ENCODE measurements at regions of chr17 and their contacts with region 1.

Region 1: DNA sequence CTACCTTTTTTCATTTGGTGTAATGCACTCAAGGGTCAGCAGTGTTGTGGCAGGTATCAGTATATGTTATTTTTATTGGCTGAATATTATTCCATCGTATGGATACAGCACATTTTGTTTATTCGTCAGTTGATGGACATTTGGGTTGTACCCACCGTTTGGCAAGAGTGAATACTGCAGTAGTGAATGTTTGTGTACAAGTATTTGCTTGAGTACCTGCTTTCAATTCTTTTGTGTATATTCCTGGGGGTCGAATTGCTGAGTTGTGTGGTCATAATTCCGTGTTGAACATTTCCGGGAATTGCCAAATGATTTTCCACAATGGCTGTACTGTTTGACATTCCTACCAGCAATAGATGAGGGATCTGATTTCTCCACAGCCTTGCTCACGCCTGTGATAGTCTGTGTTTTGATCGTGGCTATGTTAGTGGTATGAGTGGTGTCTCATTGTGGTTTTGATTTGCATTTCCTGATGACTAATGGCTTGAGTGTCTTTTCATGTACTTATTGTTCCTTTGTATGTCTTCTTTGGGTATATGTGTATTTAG is 108.4 kb downstream of the OR1D5 start:
- DNase-seq: peak; percentile 34
- H3K4me3 Mint-ChIP-seq: no peak overlapping the region
- H3K27ac Mint-ChIP-seq: no peak overlapping the region
- H3K4me1 Mint-ChIP-seq: peaks cover 9% of the 10 kb centered on the region
- H3K27me3 Mint-ChIP-seq: no peaks in the 10 kb centered on the region

Region 2: GRCh38 chr17:2580661-2581060 is 374.3 kb before region 1 on chr17:
- CTCF ChIA-PET with region 1: no interaction called
- intact Hi-C with region 1: no loop called
- DNase-seq: no peak
- H3K4me3 Mint-ChIP-seq: no peak overlapping the region
- H3K27ac Mint-ChIP-seq: no peak overlapping the region
- H3K4me1 Mint-ChIP-seq: no peaks in the 10 kb centered on the region
- H3K27me3 Mint-ChIP-seq: no peaks in the 10 kb centered on the region

Region 3: GRCh38 chr17:3004133-3004801 is 49.3 kb after region 1 on chr17:
- CTCF ChIA-PET with region 1: no interaction called
- intact Hi-C with region 1: loop called (anchors 10 kb)
- DNase-seq: peak; percentile 73
- H3K4me3 Mint-ChIP-seq: peak overlapping the region; percentile 41
- H3K27ac Mint-ChIP-seq: no peak overlapping the region
- H3K4me1 Mint-ChIP-seq: peaks cover 27% of the 10 kb centered on the region
- H3K27me3 Mint-ChIP-seq: no peaks in the 10 kb centered on the region

Region 4: GRCh38 chr17:3030096-3030495 is 75.1 kb after region 1 on chr17:
- CTCF ChIA-PET with region 1: no interaction called
- intact Hi-C with region 1: no loop called
- DNase-seq: no peak
- H3K4me3 Mint-ChIP-seq: no peak overlapping the region
- H3K27ac Mint-ChIP-seq: no peak overlapping the region
- H3K4me1 Mint-ChIP-seq: no peaks in the 10 kb centered on the region
- H3K27me3 Mint-ChIP-seq: no peaks in the 10 kb centered on the region